Left colon (tissue), 2 donors: ENCODE measurements at regions of chr7 and their contacts with region 1.

Region 1: DNA sequence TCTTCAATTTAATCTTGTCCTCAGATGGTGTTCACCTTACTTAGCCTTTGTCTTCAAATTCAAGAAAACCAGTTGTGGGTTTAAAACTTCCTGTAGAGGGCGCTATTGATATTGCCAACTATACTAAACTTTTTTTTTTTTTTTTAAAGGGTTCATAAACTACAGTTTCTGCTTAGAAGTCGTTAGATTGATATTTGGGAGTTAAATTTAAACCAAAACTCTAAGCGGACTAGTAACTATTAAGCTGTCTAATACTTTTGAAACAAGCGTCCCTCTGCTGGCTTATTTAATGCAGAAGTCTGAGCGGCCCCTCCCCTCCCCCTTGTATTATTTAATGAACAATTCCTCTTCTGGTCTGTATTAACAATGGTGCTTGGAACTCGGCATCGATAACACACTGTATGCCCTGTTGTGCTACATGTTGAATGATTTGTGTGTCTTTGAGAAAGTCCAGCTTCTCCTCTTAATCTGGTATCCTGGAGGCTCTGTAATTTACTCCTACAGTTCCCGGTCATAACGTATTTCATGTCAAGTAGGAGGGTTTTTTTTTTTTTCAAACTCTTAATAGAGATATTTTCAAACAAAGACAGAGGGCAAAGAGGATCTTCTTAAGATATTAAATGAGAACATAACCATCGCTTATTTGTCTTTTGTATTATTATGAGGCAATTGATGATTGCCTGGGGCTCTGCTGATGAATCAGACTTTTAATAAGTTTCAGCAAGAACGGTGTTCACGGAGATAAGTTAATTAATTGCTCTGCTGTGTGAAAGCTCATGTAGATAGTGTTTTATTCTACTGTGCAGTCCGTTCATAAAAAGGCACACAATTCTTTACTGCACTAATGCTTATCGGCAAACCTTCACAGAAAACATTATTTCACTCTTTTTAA is 22.6 kb upstream of the CREB5 start:
- DNase-seq: no peak
- ATAC-seq: no peak

Region 2: DNA sequence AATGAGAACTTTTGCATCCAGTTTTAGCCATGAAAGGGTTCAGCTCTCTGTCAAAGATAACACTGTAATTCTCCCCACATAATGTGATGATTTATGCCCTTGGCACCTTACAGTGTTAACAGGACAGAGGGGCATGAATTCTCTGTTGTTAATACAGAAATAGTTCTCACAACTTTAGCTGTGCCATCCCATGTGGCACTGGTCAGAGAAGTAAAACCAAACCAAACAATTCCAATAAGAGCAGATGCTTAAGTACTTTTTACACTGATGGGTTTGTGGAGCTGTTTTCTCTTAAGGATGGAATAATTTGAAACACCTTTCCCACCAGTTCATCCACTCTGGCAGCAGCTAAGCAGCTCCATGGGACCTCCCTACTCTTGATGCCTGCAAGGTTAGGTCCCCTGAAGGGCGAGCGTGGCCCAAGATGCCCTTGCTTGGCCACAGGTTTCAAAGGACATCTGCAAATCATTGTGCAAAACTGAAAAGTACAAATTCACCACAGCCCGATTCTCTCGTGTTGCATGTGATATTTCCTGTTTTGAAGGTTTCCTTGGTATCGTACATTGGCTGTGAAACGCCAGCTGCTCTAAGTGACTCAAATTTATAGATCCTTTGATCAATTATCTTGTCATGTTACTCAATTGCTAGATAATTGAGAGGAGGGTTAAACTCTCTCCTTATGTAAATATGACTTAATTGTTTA is 59.9 kb before region 1 on chr7:
- intact Hi-C with region 1: no loop called
- DNase-seq: no peak
- ATAC-seq: no peak

Region 3: GRCh38 chr7:28481091-28481926 is 91.6 kb after region 1 on chr7:
- intact Hi-C with region 1: no loop called
- DNase-seq: no peak
- ATAC-seq: no peak

Region 4: GRCh38 chr7:28520074-28521015 is 130.6 kb after region 1 on chr7:
- intact Hi-C with region 1: loop called in 1 of 2 experiments (anchors 10 kb)
- DNase-seq: no peak
- ATAC-seq: no peak